Dorsolateral prefrontal cortex (tissue), 120 donors: ENCODE measurements at regions of chr1 and their contacts with region 1.

Region 1: DNA sequence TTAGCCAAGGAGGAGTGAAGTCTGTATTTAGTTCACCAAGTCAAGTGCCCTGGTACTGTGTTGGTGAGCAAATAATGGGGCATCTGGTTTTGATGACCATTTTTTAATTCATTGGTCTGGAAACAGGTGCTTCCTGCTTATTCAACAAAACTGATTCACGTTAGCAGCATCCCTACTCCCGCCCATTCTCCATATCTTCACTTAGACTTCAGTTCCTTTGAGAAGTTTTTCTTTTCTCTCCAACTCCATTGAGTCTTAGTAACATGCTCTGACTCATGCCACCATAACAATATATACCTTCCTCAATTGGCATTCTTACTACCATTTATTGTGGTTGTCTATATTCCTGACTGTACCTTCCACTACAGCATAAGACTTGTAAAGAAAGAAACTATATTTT is 468.9 kb downstream of the DPYD start:
- DNase-seq: no peak
- H3K4me3 ChIP-seq: no peak overlapping the region
- H3K27ac ChIP-seq: peak overlapping the region in 1 of 59 donors; percentile 33
- H3K27me3 ChIP-seq: no peaks in the 10 kb centered on the region
- CTCF ChIP-seq: no peak

Region 2: DNA sequence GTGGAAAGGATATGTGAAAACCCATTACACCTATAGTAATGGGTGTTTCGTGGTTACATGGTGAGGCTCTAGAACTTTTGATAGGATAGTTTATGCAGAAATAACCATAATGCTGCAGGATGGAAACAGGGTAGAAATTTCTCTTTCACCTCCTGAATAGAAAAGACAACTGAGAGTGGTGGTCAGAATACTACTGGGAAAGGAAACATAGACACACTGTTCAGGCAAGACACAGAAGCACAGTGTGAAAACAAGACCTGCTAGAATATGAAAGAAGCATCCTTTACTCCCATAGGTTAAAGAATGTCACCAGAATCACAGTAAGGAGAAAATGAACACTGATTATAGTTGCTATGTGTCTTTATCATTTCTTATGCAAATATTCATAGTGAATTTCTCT is 27.7 kb before region 1 on chr1:
- intact Hi-C with region 1: loop called in 1 of 2 experiments (anchors 2 kb)
- DNase-seq: no peak
- H3K4me3 ChIP-seq: no peak overlapping the region
- H3K27ac ChIP-seq: peak overlapping the region in 30 of 59 donors; percentile 1 to 77 (median 55)
- H3K27me3 ChIP-seq: no peaks in the 10 kb centered on the region
- CTCF ChIP-seq: no peak

Region 3: DNA sequence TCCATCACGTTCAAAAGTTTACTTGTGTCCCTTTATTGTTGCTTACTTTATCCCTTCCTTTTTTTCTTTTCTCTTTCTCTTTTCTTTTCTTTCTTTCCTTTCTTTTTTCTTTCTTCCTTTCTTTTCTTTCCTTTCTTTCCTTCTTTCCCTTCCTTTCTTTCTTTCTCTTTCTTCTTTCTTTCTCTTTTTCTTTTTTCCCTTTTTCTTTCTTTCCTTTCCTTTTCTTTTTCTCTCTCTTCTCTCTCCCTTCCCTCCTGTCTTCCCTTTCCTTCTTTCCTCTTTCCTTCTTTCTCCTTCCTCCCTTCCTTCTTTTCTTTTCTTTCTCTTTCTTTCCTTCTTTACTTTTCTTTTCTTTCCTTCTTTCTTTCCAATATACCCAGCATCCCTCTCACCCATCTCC is 77.7 kb after region 1 on chr1:
- intact Hi-C with region 1: no loop called
- DNase-seq: no peak
- H3K4me3 ChIP-seq: no peak overlapping the region
- H3K27ac ChIP-seq: no peak overlapping the region
- H3K27me3 ChIP-seq: no peaks in the 10 kb centered on the region
- CTCF ChIP-seq: no peak